Mammary epithelial cell (primary cell): ENCODE measurements at regions of chr19 and their contacts with region 1.

Region 1: GRCh38 chr19:53520550-53521372 is 17.2 kb upstream of the ZNF331 start:
- DNase-seq: peak; percentile 97
- H3K4me3 ChIP-seq: peak overlapping the region; percentile 81 to 83 (median 82)
- H3K27ac ChIP-seq: peak overlapping the region; percentile 42
- H3K4me1 ChIP-seq: peaks cover 6% of the 10 kb centered on the region
- H3K27me3 ChIP-seq: no peaks in the 10 kb centered on the region
- CTCF ChIP-seq: no peak

Region 2: GRCh38 chr19:53183146-53183764 is 337.5 kb before region 1 on chr19:
- CTCF ChIA-PET with region 1: no interaction called
- dilution Hi-C with region 1: no loop called
- in situ Hi-C with region 1: no loop called
- intact Hi-C with region 1: no loop called
- DNase-seq: no peak
- H3K4me3 ChIP-seq: no peak overlapping the region
- H3K27ac ChIP-seq: no peak overlapping the region
- H3K4me1 ChIP-seq: no peaks in the 10 kb centered on the region
- H3K27me3 ChIP-seq: no peaks in the 10 kb centered on the region
- CTCF ChIP-seq: no peak

Region 3: GRCh38 chr19:53431399-53432087 is 89.2 kb before region 1 on chr19 and contains the start of gene ZNF761:
- CTCF ChIA-PET with region 1: no interaction called
- dilution Hi-C with region 1: no loop called
- in situ Hi-C with region 1: no loop called
- intact Hi-C with region 1: no loop called
- DNase-seq: peak; percentile 97
- H3K4me3 ChIP-seq: peak within 1 kb of the TSS; percentile 77 to 96 (median 91)
- H3K27ac ChIP-seq: peak within 1 kb of the TSS; percentile 94
- H3K4me1 ChIP-seq: peaks cover 7% of the 10 kb centered on the region
- H3K27me3 ChIP-seq: no peaks in the 10 kb centered on the region
- CTCF ChIP-seq: peak in 1 of 2 donors; percentile 33
- total RNA-seq, gene ZNF761: 10.3 to 11.0 TPM

Region 4: GRCh38 chr19:53455828-53456227 is 64.9 kb before region 1 on chr19:
- CTCF ChIA-PET with region 1: no interaction called
- dilution Hi-C with region 1: loop called (anchors 5 kb)
- in situ Hi-C with region 1: no loop called
- intact Hi-C with region 1: no loop called
- DNase-seq: no peak
- H3K4me3 ChIP-seq: no peak overlapping the region
- H3K27ac ChIP-seq: no peak overlapping the region
- H3K4me1 ChIP-seq: no peaks in the 10 kb centered on the region
- H3K27me3 ChIP-seq: no peaks in the 10 kb centered on the region
- CTCF ChIP-seq: no peak

Region 5: GRCh38 chr19:53612755-53613154 is 92.0 kb after region 1 on chr19:
- CTCF ChIA-PET with region 1: no interaction called
- dilution Hi-C with region 1: no loop called
- in situ Hi-C with region 1: no loop called
- intact Hi-C with region 1: no loop called
- DNase-seq: no peak
- H3K4me3 ChIP-seq: no peak overlapping the region
- H3K27ac ChIP-seq: no peak overlapping the region
- H3K4me1 ChIP-seq: no peaks in the 10 kb centered on the region
- H3K27me3 ChIP-seq: no peaks in the 10 kb centered on the region
- CTCF ChIP-seq: no peak